Heart left ventricle (tissue), 16 donors: ENCODE measurements at regions of chr6 and their contacts with region 1.

Region 1: DNA sequence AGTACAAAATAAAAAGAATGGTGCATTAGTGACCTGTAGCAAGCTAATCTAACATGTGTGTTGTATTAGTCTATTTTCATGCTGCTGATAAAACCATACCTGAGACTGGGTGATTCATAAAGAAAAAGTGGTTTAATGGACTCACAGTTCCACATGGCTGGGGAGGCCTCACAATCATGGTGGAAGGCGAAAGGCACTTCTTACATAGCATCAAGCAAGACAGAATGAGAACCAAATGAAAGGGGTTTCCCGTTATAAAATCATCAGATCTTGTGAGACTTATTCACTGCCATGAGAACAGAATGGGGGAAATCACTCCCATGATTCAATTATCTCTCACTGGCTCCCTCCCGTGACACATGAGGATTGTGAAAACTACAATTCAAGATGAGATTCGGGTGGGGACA is 45.4 kb upstream of the AIG1 start:
- DNase-seq: no peak
- ATAC-seq: no peak
- H3K4me3 ChIP-seq: no peak overlapping the region
- H3K27ac ChIP-seq: no peak overlapping the region
- H3K4me1 ChIP-seq: no peaks in the 10 kb centered on the region
- H3K27me3 ChIP-seq: no peaks in the 10 kb centered on the region
- CTCF ChIP-seq: no peak
- POLR2A ChIP-seq: no peak

Region 2: DNA sequence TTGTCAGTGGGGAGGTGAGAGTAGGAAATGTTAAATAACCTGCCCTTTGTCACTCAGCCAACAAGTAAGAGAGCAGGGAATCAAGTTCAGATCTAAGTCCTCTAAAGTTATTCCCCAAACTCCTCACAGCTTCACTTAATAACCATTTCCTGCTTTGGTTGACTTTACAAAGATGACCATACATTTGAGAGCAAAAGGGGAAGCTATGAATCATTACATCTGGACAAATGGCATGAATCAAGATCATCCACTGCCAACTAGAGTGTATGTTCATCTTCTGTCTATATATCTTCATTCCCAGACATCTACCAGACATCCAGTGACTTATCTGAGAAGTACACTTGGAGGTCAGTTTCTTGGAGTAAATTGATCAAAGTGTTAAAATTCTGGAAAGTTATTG is 55.2 kb before region 1 on chr6:
- intact Hi-C with region 1: loop called in 1 of 10 experiments (anchors 10 kb)
- DNase-seq: no peak
- ATAC-seq: no peak
- H3K4me3 ChIP-seq: no peak overlapping the region
- H3K27ac ChIP-seq: no peak overlapping the region
- H3K4me1 ChIP-seq: peaks cover 0 to 4% (median 0%) of the 10 kb centered on the region in 12 donors
- H3K27me3 ChIP-seq: no peaks in the 10 kb centered on the region
- CTCF ChIP-seq: no peak
- POLR2A ChIP-seq: no peak

Region 3: GRCh38 chr6:143098054-143098671 is 82.9 kb after region 1 on chr6:
- intact Hi-C with region 1: no loop called
- DNase-seq: no peak
- ATAC-seq: peak in 2 of 4 donors; percentile 58 to 76
- H3K4me3 ChIP-seq: no peak overlapping the region
- H3K27ac ChIP-seq: peak overlapping the region in 2 of 12 donors; percentile 27 to 40
- H3K4me1 ChIP-seq: peaks cover 0 to 25% (median 12%) of the 10 kb centered on the region in 12 donors
- H3K27me3 ChIP-seq: no peaks in the 10 kb centered on the region
- CTCF ChIP-seq: no peak
- POLR2A ChIP-seq: no peak

Region 4: GRCh38 chr6:144528743-144529425 is 1513.6 kb after region 1 on chr6:
- intact Hi-C with region 1: no loop called
- DNase-seq: peak in 1 of 5 donors; percentile 26
- ATAC-seq: peak in 1 of 4 donors; percentile 11
- H3K4me3 ChIP-seq: no peak overlapping the region
- H3K27ac ChIP-seq: no peak overlapping the region
- H3K4me1 ChIP-seq: peaks cover 0 to 9% (median 0%) of the 10 kb centered on the region in 12 donors
- H3K27me3 ChIP-seq: no peaks in the 10 kb centered on the region
- CTCF ChIP-seq: no peak
- POLR2A ChIP-seq: no peak